Transverse colon (tissue), 4 donors: ENCODE measurements at regions of chr11 and their contacts with region 1.

Region 1: DNA sequence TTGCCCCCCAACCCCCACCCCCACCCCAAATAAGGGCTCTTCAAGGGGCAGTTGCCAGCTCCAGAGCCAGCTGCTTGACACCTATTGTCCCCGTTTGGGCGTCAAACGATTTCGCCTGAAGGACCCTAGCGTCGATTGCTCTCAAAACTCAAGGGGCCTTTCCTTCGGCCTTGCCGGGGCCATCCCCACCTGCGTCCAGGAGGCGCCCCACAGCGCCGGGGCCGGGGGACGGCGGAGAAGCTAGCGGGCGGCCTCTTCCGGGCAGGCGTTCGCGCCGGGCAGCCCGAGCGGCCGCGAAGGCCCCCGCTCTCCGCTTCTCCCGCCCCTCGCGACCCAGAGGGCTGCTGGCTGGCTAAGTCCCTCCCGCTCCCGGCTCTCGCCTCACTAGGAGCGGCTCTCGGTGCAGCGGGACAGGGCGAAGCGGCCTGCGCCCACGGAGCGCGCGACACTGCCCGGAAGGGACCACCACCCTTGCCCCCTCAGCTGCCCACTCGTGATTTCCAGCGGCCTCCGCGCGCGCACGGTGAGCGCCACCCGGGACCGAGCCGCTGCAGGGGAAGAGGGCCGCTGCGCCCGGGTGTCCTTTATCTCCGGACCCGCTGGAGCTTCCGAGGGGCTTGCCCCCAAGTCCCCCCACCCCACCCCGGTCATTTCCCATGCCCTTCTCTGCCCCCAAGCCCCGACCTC is at the start of gene CAPRIN1:
- DNase-seq: peak; percentile 89
- H3K4me3 ChIP-seq: peak within 1 kb of the TSS; percentile 90 to 98 (median 94)
- H3K27ac ChIP-seq: peak within 1 kb of the TSS; percentile 99 to 100 (median 99)
- H3K4me1 ChIP-seq: peaks cover 20 to 39% (median 37%) of the 10 kb centered on the region in 4 donors
- H3K27me3 ChIP-seq: no peaks in the 10 kb centered on the region
- CTCF ChIP-seq: no peak
- EP300 ChIP-seq: no peak
- POLR2A ChIP-seq: peak; percentile 91
- total RNA-seq, gene CAPRIN1: 129 to 163 (median 152) TPM

Region 2: GRCh38 chr11:34105079-34105956 is 53.8 kb after region 1 on chr11 and contains the start of gene NAT10:
- in situ Hi-C with region 1: loop called in 2 of 4 experiments (anchors 10 kb)
- intact Hi-C with region 1: loop called (anchors 5 kb)
- DNase-seq: peak; percentile 98
- H3K4me3 ChIP-seq: peak within 1 kb of the TSS; percentile 41 to 93 (median 75)
- H3K27ac ChIP-seq: peak within 1 kb of the TSS; percentile 90 to 96 (median 92)
- H3K4me1 ChIP-seq: peaks cover 7 to 24% (median 18%) of the 10 kb centered on the region in 4 donors
- H3K27me3 ChIP-seq: no peaks in the 10 kb centered on the region
- CTCF ChIP-seq: peak in 3 of 5 experiments; percentile 14 to 50 (median 31)
- EP300 ChIP-seq: no peak
- POLR2A ChIP-seq: peak; percentile 93
- total RNA-seq, gene NAT10: 16.0 to 40.6 (median 26.9) TPM